Activated naive CD4-positive, alpha-beta T cell treated with anti-CD3 and anti-CD28 coated beads for 36 hours (primary cell): ENCODE measurements at regions of chr12 and their contacts with region 1.

Region 1: GRCh38 chr12:69070319-69071090 is 137.5 kb upstream of the CPM start:
- DNase-seq: peak; percentile 87
- H3K4me3 Mint-ChIP-seq: no peak overlapping the region
- H3K27ac Mint-ChIP-seq: no peak overlapping the region
- H3K4me1 Mint-ChIP-seq: peaks cover 38% of the 10 kb centered on the region
- H3K27me3 Mint-ChIP-seq: peaks cover 8% of the 10 kb centered on the region

Region 2: DNA sequence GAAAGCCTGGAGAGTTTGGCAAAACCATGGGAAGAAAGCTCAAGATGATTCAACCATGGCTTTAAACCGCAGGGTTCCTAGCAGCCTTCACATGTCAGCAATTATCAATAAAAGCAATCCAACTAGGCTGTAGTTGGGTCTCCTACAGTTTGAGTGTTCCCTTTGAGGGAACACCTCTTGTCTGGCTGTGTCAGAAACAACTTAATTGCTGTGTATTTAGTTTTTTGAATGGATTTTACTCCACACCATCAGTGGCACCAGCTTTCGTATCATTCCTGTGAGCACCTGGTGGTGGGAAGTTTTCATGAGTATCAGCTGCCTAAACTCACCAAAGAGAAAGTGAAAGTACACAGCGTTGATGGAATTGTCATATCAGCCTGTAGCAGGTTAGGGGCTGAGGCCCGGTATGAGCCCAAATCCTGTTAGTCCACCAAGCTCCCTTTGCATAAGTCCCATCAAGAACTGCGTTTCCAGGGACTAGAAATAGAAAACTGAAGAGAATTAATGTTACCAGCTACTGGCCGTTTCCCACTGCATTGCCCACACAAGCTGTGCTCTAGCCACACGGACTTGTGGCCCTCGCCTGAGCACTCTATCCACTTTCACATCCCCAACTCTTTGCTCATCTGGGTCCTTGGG is 834.0 kb before region 1 on chr12:
- CTCF ChIA-PET with region 1: no interaction called
- intact Hi-C with region 1: loop called (anchors 5 kb)
- DNase-seq: peak; percentile 43
- H3K4me3 Mint-ChIP-seq: peak overlapping the region; percentile 75
- H3K27ac Mint-ChIP-seq: peak overlapping the region; percentile 57
- H3K4me1 Mint-ChIP-seq: peaks cover 48% of the 10 kb centered on the region
- H3K27me3 Mint-ChIP-seq: no peaks in the 10 kb centered on the region

Region 3: DNA sequence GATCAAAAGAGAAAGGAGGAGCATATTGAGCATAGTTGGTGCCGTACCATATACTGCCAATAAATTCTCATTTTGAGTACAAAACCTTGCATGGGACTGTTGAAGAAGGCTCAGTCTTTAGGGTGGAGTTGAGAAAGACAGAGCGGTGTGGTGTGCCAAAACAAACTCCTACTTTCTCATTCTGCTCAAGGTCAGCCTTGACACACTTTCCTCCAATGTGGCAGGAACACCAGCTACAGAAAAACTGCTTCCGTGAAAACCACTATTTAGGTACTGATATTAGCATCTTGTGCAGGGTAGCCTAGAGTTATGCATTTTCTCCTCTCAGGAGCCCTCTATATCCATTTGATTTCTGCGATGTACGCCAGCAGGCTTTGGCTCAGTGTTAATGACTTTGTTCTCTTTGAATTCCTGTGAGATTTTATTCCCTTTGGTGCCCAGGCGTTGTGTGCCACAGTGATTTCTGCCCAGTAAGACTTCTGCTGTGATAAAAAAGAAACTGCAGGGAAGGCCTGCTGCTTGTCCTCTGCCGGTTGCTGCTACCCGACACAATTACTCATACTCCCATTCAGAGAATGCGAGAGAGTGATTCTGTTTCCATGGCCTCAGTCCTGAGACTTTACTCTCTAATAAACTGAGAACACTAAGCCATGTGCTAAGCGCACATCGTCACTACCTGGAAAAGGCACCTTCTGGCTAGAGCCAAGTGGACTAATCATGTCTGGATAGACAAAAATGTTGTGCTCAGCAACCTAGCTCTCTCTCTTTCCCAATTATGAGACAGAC is 650.1 kb before region 1 on chr12:
- CTCF ChIA-PET with region 1: no interaction called
- intact Hi-C with region 1: no loop called
- DNase-seq: no peak
- H3K4me3 Mint-ChIP-seq: no peak overlapping the region
- H3K27ac Mint-ChIP-seq: no peak overlapping the region
- H3K4me1 Mint-ChIP-seq: peaks cover 8% of the 10 kb centered on the region
- H3K27me3 Mint-ChIP-seq: no peaks in the 10 kb centered on the region

Region 4: DNA sequence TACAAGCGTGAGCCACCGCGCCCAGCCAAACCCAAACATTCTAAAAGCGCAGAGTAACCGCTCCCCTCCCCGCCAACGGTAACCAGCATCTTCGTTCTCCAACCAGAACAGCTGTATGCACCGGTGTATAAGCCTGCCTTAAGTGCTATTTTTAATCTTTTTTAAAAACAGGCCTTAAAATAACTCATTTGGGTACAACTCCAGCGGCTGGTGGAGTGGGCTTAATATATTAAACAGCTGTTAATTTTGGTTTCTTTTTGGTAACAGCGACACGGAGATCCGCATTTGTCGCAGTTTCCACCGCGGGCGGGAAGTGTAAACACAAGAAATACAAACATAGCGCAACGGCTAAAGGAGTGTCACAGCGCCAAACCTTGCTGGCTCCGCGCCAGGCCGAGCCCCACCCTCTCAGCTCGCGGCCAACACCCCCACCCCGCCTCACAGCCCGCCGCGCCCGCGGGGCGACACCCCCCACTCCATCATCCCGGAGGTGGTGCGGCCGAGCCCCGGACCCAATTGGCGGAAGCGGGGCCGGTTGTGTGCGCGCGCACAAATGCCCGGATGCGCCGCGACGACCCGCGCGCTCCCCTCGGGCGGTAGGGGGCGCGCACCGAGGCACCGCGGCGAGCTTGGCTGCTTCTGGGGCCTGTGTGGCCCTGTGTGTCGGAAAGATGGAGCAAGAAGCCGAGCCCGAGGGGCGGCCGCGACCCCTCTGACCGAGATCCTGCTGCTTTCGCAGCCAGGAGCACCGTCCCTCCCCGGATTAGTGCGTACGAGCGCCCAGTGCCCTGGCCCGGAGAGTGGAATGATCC is 262.7 kb before region 1 on chr12 and contains the start of gene MDM2:
- CTCF ChIA-PET with region 1: interaction called, 3 read pairs
- intact Hi-C with region 1: loop called (anchors 1 kb)
- DNase-seq: peak; percentile 95
- H3K4me3 Mint-ChIP-seq: peak within 1 kb of the TSS; percentile 97
- H3K27ac Mint-ChIP-seq: peak within 1 kb of the TSS; percentile 98
- H3K4me1 Mint-ChIP-seq: peaks cover 24% of the 10 kb centered on the region
- H3K27me3 Mint-ChIP-seq: no peaks in the 10 kb centered on the region
- total RNA-seq, gene MDM2: 165 to 166 TPM

Region 5: GRCh38 chr12:68865399-68866164 is 204.9 kb before region 1 on chr12:
- CTCF ChIA-PET with region 1: interaction called, 8 read pairs
- intact Hi-C with region 1: loop called (anchors 1 kb)
- DNase-seq: no peak
- H3K4me3 Mint-ChIP-seq: no peak overlapping the region
- H3K27ac Mint-ChIP-seq: no peak overlapping the region
- H3K4me1 Mint-ChIP-seq: peaks cover 6% of the 10 kb centered on the region
- H3K27me3 Mint-ChIP-seq: no peaks in the 10 kb centered on the region

Region 6: GRCh38 chr12:68958322-68958721 is 112.2 kb before region 1 on chr12:
- CTCF ChIA-PET with region 1: interaction called, 3 read pairs
- intact Hi-C with region 1: loop called (anchors 1 kb)
- DNase-seq: peak; percentile 80
- H3K4me3 Mint-ChIP-seq: peak overlapping the region; percentile 34
- H3K27ac Mint-ChIP-seq: peak overlapping the region; percentile 98
- H3K4me1 Mint-ChIP-seq: peaks cover 54% of the 10 kb centered on the region
- H3K27me3 Mint-ChIP-seq: no peaks in the 10 kb centered on the region

Region 7: DNA sequence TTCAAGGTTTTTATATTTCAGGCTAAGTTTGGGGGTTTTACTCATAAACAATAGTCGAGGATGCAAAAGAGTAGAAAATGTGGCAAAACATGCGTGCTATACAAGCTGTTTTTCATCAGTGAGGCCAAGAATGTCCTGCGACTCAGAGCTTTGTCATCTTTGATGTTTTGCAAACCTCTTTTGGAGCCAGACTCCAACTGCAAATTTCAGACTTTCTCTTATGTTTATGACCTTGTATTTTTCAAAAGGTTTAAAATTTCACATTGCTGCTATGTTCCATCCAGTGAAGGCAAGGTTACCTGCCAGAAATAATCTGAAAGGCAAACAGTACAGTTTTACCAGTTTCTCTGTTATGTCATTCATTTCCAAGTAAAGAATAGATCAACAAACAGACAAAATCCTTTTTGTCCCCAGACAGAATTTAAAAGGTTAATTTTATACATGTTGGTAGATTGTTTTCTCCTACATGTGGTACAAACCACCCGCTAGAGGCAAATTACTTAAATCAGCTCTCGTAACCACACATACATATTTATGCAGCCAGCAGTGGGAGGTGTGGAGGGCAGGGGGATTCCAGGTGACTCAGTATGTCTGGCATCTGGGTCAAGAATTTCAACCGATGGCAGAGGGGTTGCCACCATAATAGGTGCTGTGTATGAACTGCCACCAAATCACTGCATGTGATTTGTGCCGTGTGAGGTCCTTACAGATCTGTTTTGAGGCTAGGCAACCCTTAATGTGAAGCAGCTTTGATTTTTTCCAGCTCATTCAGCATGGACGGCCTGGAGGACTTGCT is 17.7 kb before region 1 on chr12:
- CTCF ChIA-PET with region 1: interaction called, 8 read pairs
- intact Hi-C with region 1: loop called (anchors 1 kb)
- DNase-seq: peak; percentile 87
- H3K4me3 Mint-ChIP-seq: no peak overlapping the region
- H3K27ac Mint-ChIP-seq: peak overlapping the region; percentile 77
- H3K4me1 Mint-ChIP-seq: peaks cover 32% of the 10 kb centered on the region
- H3K27me3 Mint-ChIP-seq: peaks cover 12% of the 10 kb centered on the region